Tibial artery (tissue), 4 donors: ENCODE measurements at regions of chr15 and their contacts with region 1.

Region 1: DNA sequence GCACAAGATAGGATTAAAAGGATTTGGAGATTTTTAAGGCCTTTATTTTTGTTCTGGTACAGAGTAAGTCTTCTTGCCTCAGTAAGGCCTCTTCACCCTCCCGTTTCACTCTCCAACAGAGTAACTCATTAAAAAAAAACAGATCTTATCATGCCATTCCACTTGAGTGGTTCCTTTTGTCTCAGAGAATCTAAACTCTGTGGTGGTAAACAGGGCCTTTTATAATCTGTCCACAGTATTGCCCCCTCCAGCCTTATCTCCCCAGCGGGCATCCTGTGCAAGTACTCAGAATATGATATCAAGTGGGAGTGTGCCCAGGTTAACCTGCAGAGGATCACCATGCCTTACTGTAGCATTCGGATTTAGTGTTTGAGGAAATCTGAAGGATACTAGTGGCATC is 20.3 kb upstream of the ATOSA start:
- DNase-seq: no peak
- H3K4me3 ChIP-seq: no peak overlapping the region
- H3K27ac ChIP-seq: no peak overlapping the region
- H3K4me1 ChIP-seq: no peaks in the 10 kb centered on the region
- H3K27me3 ChIP-seq: peaks cover 0 to 3% of the 10 kb centered on the region in 2 donors
- CTCF ChIP-seq: no peak

Region 2: GRCh38 chr15:52710050-52710707 is 10.7 kb after region 1 on chr15:
- intact Hi-C with region 1: no loop called
- DNase-seq: no peak
- H3K4me3 ChIP-seq: no peak overlapping the region
- H3K27ac ChIP-seq: no peak overlapping the region
- H3K4me1 ChIP-seq: no peaks in the 10 kb centered on the region
- H3K27me3 ChIP-seq: no peaks in the 10 kb centered on the region
- CTCF ChIP-seq: no peak

Region 3: GRCh38 chr15:52730173-52730572 is 30.7 kb after region 1 on chr15:
- intact Hi-C with region 1: loop called (anchors 5 kb)
- DNase-seq: peak in 1 of 2 donors; percentile 24
- H3K4me3 ChIP-seq: no peak overlapping the region
- H3K27ac ChIP-seq: no peak overlapping the region
- H3K4me1 ChIP-seq: no peaks in the 10 kb centered on the region
- H3K27me3 ChIP-seq: no peaks in the 10 kb centered on the region
- CTCF ChIP-seq: no peak